ENCODE measurements at regions of chr2 and their contacts with region 1.

Region 1: DNA sequence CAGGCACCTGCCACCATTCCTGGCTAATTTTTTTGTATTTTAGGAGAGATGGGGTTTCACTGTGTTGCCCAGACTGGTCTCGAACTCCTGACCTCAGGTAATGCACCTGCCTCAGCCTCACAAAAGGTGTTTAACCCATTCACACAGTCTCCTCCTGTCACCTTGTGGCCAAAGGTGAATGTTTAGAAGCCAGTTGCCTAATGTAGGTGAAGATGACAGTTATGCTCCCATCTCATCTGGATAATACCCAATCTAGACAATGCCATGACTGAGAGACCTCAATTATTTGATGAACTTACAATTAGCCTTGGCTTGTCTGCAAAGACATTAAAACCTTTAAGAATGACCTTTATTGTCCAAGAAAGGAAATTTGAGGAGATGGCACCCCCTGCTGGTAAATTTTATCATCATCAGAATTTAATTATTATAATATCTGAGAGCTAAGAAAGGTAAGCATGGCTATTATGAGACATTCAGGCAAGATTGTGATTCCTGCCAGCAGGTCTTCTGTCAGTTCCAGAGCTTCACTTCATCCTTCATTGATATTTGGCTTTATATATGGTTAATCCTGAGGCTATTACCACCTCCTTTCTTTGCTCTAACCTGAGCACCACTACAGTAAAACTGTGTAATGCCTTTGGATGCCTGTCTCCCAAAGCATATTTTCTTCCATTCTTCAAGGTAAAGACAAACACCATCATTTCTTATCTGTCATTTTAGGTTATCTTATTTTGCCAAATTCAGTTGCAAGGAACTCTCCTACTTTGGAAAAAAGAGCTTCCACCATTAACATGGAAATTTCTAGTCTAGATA is 117.6 kb downstream of the FAM124B start:
- DNase-seq: peak; percentile 24
- H3K4me3 ChIP-seq: no peak overlapping the region
- H3K27ac ChIP-seq: no peak overlapping the region
- H3K4me1 ChIP-seq: no peaks in the 10 kb centered on the region
- H3K27me3 ChIP-seq: no peaks in the 10 kb centered on the region
- CTCF ChIP-seq: peak; percentile 32 to 88 (median 80)
- POLR2A ChIP-seq: no peak

Region 2: DNA sequence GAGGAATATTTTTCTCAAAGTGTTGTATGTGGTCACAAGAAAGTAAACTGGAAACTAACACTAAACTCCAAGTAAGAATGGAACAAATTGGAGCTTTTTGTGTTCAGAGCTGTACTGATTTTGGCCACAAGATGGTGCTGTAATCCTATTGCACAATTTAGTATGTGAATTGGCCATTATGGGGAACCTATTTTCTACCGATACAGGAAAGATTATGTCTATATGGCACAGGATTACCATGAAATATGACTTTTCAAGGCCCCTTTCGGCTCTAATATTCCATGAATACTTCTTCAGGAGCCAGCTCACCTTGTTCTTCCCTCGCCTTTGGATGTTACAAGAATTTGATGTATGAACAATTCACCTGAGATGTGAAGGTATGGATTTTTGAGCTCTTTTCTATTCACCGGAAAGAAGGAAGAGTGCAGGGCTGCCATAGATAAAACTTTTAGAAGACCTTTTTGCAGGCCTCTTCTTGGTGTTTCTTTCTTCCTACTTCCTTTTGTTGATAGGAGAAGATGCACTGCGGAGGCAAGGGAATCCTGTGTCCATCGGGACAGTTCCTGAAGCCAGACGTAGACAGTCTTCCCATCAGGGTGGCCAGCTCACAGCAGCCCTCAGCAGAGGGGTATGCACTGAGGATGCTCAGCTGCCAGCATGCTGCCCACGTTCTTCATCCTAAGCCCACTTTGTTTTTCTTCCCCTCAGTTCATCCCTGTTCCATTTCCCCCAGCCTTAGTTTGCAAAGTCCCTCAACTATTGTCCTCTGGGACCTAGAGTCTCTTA is 313.8 kb before region 1 on chr2:
- intact Hi-C with region 1: loop called (anchors 2 kb)
- DNase-seq: peak; percentile 46
- H3K4me3 ChIP-seq: no peak overlapping the region
- H3K27ac ChIP-seq: no peak overlapping the region
- H3K4me1 ChIP-seq: no peaks in the 10 kb centered on the region
- H3K27me3 ChIP-seq: no peaks in the 10 kb centered on the region
- CTCF ChIP-seq: peak; percentile 69 to 91 (median 88)
- POLR2A ChIP-seq: no peak

Region 3: DNA sequence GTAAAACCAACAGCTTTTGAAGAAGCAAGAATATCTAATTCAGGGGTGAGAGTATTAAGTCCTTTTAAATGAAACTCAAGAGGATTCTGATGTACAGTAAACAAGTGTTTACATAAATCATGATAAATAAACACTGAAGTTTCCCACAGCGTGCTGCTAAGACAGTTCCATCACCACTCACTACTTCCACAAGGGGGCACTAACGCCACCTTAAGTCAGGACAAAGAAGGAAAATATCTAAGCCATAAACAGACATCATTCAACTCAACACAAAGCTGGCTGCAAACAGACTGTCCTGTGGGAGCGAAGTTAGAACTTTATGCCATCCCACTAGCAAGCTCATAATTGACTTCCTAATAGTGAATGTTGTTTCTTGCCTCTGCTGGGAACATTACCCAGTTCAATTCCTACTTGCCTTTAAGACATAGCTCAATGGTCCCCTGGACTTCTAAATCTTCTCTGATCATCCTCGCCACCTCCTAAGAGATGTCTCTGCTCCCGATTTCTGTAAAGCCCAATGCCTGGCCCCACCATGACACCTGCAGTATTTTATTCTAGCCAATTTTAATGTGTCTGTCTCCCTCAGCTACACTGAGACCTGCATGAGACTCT is 290.6 kb before region 1 on chr2:
- intact Hi-C with region 1: loop called (anchors 2 kb)
- DNase-seq: peak; percentile 60
- H3K4me3 ChIP-seq: no peak overlapping the region
- H3K27ac ChIP-seq: no peak overlapping the region
- H3K4me1 ChIP-seq: no peaks in the 10 kb centered on the region
- H3K27me3 ChIP-seq: no peaks in the 10 kb centered on the region
- CTCF ChIP-seq: peak; percentile 68 to 89 (median 75)
- POLR2A ChIP-seq: no peak

Measured in prostate gland (tissue), 2 donors.